Activated CD4-positive, alpha-beta memory T cell treated with anti-CD3 and anti-CD28 coated beads for 36 hours (primary cell): ENCODE measurements at regions of chr17 and their contacts with region 1.

Region 1: GRCh38 chr17:43316522-43317142 is 82.2 kb upstream of the ARL4D start:
- DNase-seq: peak; percentile 37
- H3K4me3 Mint-ChIP-seq: no peak overlapping the region
- H3K27ac Mint-ChIP-seq: peak overlapping the region; percentile 51
- H3K4me1 Mint-ChIP-seq: peaks cover 14% of the 10 kb centered on the region
- H3K27me3 Mint-ChIP-seq: no peaks in the 10 kb centered on the region

Region 2: GRCh38 chr17:43006639-43007551 is 309.7 kb before region 1 on chr17 and contains the start of gene IFI35:
- CTCF ChIA-PET with region 1: no interaction called
- POLR2A ChIA-PET with region 1: interaction called, 10 read pairs
- intact Hi-C with region 1: no loop called
- DNase-seq: peak; percentile 94
- H3K4me3 Mint-ChIP-seq: peak within 1 kb of the TSS; percentile 100
- H3K27ac Mint-ChIP-seq: peak within 1 kb of the TSS; percentile 99
- H3K4me1 Mint-ChIP-seq: peaks cover 17% of the 10 kb centered on the region
- H3K27me3 Mint-ChIP-seq: no peaks in the 10 kb centered on the region
- total RNA-seq, gene IFI35: 66.0 to 68.6 TPM

Region 3: DNA sequence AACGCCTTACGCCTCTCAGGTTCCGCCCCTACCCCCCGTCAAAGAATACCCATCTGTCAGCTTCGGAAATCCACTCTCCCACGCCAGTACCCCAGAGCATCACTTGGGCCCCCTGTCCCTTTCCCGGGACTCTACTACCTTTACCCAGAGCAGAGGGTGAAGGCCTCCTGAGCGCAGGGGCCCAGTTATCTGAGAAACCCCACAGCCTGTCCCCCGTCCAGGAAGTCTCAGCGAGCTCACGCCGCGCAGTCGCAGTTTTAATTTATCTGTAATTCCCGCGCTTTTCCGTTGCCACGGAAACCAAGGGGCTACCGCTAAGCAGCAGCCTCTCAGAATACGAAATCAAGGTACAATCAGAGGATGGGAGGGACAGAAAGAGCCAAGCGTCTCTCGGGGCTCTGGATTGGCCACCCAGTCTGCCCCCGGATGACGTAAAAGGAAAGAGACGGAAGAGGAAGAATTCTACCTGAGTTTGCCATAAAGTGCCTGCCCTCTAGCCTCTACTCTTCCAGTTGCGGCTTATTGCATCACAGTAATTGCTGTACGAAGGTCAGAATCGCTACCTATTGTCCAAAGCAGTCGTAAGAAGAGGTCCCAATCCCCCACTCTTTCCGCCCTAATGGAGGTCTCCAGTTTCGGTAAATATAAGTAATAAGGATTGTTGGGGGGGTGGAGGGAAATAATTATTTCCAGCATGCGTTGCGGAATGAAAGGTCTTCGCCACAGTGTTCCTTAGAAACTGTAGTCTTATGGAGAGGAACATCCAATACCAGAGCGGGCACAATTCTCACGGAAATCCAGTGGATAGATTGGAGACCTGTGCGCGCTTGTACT is 191.3 kb before region 1 on chr17 and contains the start of gene BRCA1:
- CTCF ChIA-PET with region 1: no interaction called
- POLR2A ChIA-PET with region 1: interaction called, 16 read pairs
- intact Hi-C with region 1: loop called (anchors 10 kb)
- DNase-seq: peak; percentile 97
- H3K4me3 Mint-ChIP-seq: peak within 1 kb of the TSS; percentile 97
- H3K27ac Mint-ChIP-seq: peak within 1 kb of the TSS; percentile 95
- H3K4me1 Mint-ChIP-seq: peaks cover 34% of the 10 kb centered on the region
- H3K27me3 Mint-ChIP-seq: no peaks in the 10 kb centered on the region
- total RNA-seq, gene BRCA1: 92.8 to 103 TPM

Region 4: DNA sequence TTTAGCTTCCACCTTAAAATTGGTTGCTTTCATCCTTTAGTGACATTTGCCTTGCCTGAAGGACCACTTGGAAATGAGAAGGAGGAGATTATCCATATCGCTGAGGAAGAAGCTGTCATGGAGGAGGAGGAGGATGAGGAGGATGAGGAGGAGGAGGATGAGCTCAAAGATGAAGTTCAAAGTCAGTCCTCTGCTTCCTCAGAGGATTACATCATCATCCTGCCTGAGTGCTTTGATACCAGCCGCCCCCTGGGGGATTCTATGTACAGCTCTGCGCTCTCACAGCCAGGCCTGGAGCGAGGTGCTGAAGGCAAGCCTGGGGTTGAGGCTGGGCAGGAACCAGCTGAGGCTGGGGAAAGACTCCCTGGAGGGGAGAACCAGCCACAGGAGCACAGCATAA is 116.5 kb before region 1 on chr17:
- CTCF ChIA-PET with region 1: no interaction called
- POLR2A ChIA-PET with region 1: interaction called, 20 read pairs
- intact Hi-C with region 1: no loop called
- DNase-seq: peak; percentile 14
- H3K4me3 Mint-ChIP-seq: no peak overlapping the region
- H3K27ac Mint-ChIP-seq: peak overlapping the region; percentile 72
- H3K4me1 Mint-ChIP-seq: peaks cover 8% of the 10 kb centered on the region
- H3K27me3 Mint-ChIP-seq: no peaks in the 10 kb centered on the region

Region 5: DNA sequence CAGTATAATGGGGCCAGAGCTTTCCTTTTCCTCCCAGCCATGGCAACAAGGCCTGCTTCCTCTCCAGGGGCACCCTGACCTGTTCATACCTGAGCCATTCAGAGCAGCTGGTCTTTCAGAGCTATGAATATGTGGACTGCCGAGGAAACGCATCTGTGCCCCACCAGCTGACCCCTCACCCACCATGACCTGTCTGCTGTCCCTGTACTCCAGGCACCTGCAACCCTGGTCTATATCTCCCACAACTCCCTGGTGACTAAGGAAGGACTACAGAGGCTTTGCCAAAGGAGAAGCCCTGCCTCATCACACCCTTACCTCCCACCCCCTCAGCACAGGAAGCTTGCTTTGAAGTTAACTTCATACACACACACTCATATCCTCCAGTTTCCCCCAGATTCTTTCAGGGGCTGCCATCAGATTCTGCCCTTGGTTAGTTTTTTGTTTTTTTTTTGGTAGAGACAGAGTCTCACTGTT is 99.0 kb before region 1 on chr17:
- CTCF ChIA-PET with region 1: interaction called, 3 read pairs
- POLR2A ChIA-PET with region 1: interaction called, 64 read pairs
- intact Hi-C with region 1: loop called (anchors 1 kb)
- DNase-seq: peak; percentile 33
- H3K4me3 Mint-ChIP-seq: no peak overlapping the region
- H3K27ac Mint-ChIP-seq: peak overlapping the region; percentile 76
- H3K4me1 Mint-ChIP-seq: peaks cover 27% of the 10 kb centered on the region
- H3K27me3 Mint-ChIP-seq: no peaks in the 10 kb centered on the region

Region 6: DNA sequence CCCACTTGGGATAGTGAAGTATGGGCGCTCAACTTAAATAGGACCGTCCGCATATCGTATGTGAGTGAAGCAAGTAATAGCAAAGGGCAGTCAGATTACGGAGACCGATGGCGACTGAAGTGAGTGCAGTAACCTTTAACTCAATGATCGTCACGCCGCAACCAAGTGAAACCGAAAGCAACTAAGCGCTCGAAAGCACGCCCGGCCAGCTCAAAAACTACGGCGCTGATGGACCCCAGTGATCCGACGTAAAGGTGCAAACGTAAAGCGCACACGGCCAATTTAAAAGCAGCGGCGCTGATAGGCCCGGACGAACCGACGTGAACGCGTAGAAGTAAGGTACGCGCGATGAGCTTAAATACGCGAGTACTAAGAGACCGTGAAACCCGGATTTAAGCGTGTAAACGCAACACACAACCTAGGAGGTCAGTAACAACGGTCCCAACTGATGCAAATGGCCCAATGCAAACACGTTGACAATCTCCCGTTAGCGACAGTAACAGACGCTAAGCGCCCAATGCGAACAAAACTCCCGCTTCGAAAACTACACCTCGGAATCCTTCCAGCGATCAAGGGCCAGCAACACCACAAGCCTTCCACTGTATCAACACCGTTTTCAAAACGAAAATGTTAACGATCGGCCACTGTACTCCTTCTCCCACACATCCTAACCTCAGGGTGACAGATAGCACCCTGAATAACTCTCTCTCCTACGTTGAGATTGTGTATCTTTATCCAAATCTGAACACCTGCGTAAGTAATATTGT is 44.3 kb after region 1 on chr17:
- CTCF ChIA-PET with region 1: interaction called, 3 read pairs
- POLR2A ChIA-PET with region 1: interaction called, 97 read pairs
- intact Hi-C with region 1: no loop called
- DNase-seq: peak; percentile 93
- H3K4me3 Mint-ChIP-seq: peak overlapping the region; percentile 86
- H3K27ac Mint-ChIP-seq: peak overlapping the region; percentile 99
- H3K4me1 Mint-ChIP-seq: peaks cover 29% of the 10 kb centered on the region
- H3K27me3 Mint-ChIP-seq: peaks cover 11% of the 10 kb centered on the region

Region 7: DNA sequence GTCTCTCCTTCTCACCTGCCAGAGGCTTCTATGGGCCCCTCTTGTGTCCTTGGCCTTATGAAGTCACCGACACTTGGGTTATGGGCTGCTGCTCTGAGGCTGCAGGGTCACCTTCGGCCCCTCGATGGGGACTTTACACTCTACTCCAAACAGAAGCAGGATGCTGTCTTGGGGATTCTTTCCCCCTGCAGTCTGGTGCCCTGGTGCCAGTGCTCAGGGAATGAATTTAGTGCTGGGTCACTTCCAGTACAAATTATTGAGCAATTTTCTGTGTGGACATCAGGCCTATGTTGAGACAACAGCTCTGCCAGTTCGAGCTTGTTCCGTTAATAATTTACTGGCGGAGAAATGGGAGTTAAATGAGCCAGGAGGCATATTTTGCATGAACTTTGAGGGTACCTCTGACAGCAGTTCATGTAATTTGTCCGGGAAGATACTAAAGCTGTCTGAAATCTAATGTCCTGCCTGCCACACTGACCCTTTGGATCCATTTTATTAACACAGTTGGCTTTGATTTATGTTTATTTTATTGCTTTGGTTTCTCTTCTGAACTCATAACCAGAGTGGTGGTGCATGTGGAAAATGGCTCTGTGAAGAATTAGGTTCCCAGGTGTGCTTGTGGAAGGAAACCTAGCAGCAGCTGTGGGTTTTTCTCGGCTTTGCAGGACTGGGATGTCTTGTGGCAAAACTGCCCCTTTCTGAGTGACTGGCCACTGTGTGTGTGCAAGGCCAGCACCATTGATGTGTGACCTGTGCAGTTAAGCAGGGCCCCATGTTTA is 133.0 kb after region 1 on chr17:
- CTCF ChIA-PET with region 1: no interaction called
- POLR2A ChIA-PET with region 1: no interaction called
- intact Hi-C with region 1: no loop called
- DNase-seq: no peak
- H3K4me3 Mint-ChIP-seq: no peak overlapping the region
- H3K27ac Mint-ChIP-seq: no peak overlapping the region
- H3K4me1 Mint-ChIP-seq: no peaks in the 10 kb centered on the region
- H3K27me3 Mint-ChIP-seq: peaks cover 9% of the 10 kb centered on the region